Endothelial cell of umbilical vein (primary cell): ENCODE measurements at regions of chr15 and their contacts with region 1.

Region 1: DNA sequence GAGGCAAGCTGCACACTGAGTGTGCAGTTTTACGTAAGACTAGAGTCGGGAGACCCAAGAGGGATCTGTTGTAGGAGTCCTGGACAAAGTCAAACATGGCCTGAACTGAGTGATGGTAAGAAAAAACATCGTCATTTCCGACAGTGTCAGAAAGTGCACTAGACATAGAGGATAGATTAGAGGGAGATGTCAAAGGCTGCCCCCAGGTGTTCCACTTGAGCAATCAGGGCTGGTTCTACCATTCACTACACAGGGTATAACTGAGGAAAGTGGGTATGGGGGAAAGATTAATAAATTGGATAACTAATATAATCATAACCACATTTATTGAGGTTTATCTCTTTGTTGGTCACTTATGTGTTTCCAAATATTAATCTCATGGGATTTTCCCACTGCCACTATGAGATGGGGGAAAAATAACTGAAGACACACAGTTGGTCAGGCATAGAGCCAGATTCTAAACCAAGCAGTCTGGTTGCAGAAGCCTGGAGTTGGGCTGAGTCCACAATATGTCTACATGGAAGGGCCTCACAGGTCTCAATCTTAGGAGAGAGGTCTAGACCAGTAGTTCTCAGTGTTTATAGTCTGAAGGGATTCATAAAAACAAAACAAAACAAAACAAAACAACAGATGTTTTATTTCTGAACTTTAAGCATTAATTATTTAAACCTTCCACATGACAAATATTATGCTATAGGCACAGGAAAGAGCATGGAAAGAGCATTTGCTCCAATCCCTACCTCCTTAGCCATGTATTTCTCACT is 766.5 kb downstream of the NTRK3 start:
- DNase-seq: no peak
- H3K4me3 ChIP-seq: no peak overlapping the region
- H3K27ac ChIP-seq: no peak overlapping the region
- H3K4me1 ChIP-seq: no peaks in the 10 kb centered on the region
- H3K27me3 ChIP-seq: no peaks in the 10 kb centered on the region
- CTCF ChIP-seq: no peak
- POLR2A ChIP-seq: no peak

Region 2: GRCh38 chr15:87863152-87863551 is 373.1 kb after region 1 on chr15:
- CTCF ChIA-PET with region 1: no interaction called
- POLR2A ChIA-PET with region 1: no interaction called
- dilution Hi-C with region 1: no loop called
- intact Hi-C with region 1: loop called (anchors 5 kb)
- DNase-seq: no peak
- H3K4me3 ChIP-seq: no peak overlapping the region
- H3K27ac ChIP-seq: no peak overlapping the region
- H3K4me1 ChIP-seq: no peaks in the 10 kb centered on the region
- H3K27me3 ChIP-seq: no peaks in the 10 kb centered on the region
- CTCF ChIP-seq: no peak
- POLR2A ChIP-seq: no peak